ENCODE measurements at regions of chr10 and their contacts with region 1.

Region 1: GRCh38 chr10:80382989-80383388 is 25.4 kb upstream of the PRXL2A start:
- DNase-seq: peak; percentile 59
- H3K4me3 ChIP-seq: no peak overlapping the region
- H3K27ac ChIP-seq: no peak overlapping the region
- H3K4me1 ChIP-seq: no peaks in the 10 kb centered on the region
- CTCF ChIP-seq: peak; percentile 82

Region 2: DNA sequence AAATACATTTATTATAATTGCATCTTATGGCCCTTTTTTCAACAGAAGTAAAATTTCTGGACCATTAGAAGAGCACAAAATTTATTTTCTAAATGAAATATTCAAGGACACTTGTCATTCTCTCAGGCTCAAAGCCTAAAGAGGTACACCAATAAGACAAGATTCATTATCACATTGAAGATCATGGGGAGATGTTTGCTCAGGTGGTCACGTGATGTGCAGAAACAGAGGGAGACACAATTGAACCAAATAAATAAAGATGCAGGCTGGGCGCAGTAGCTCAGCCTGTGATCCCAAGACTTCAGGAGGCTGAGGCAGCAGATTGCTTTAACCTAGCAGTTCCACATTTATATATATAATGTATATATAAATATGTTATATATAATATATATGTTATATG is 357.7 kb before region 1 on chr10:
- CTCF ChIA-PET with region 1: no interaction called
- POLR2A ChIA-PET with region 1: no interaction called
- intact Hi-C with region 1: no loop called
- DNase-seq: no peak
- H3K4me3 ChIP-seq: no peak overlapping the region
- H3K27ac ChIP-seq: no peak overlapping the region
- H3K4me1 ChIP-seq: no peaks in the 10 kb centered on the region
- CTCF ChIP-seq: no peak

Region 3: GRCh38 chr10:80444646-80445319 is 61.8 kb after region 1 on chr10:
- CTCF ChIA-PET with region 1: no interaction called
- POLR2A ChIA-PET with region 1: no interaction called
- intact Hi-C with region 1: loop called (anchors 2 kb)
- DNase-seq: peak; percentile 79
- H3K4me3 ChIP-seq: no peak overlapping the region
- H3K27ac ChIP-seq: no peak overlapping the region
- H3K4me1 ChIP-seq: peaks cover 20% of the 10 kb centered on the region
- CTCF ChIP-seq: peak; percentile 89

Region 4: DNA sequence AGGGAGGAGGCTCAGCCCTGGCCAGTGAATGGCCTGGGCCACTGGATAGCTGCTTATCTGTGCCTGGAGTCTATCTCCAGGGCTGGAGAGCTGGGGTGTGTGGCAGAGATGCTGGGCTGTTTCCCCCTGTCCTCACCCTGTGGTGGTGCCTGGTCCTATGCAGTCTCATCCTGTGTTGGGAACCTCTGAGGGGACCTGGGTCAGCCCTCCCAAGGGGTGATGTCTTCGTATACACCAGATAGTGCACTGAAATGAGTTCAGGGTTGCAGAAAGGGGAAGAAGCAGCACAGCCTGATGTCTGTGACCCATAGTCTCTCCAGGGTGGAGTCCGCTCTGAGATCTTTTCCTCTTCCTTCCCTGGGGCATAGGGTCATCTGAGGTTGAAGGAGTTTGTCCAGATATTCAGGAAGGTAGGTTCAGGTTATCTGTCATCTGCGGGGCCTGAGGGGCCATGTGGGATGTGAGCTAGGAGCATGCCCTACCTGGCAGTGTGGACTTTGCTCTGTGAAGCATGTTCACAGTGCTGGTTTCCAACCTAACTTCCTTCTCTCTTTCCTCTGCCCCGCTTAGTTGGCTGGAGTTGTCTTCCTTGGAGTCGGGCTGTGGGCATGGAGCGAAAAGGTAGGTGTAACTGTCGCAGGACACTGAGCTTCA is 121.3 kb after region 1 on chr10:
- CTCF ChIA-PET with region 1: interaction called, 5 read pairs
- POLR2A ChIA-PET with region 1: interaction called, 4 read pairs
- intact Hi-C with region 1: loop called (anchors 1 kb)
- DNase-seq: no peak
- H3K4me3 ChIP-seq: no peak overlapping the region
- H3K27ac ChIP-seq: no peak overlapping the region
- H3K4me1 ChIP-seq: no peaks in the 10 kb centered on the region
- CTCF ChIP-seq: no peak

Region 5: GRCh38 chr10:80589726-80590373 is 206.9 kb after region 1 on chr10:
- CTCF ChIA-PET with region 1: no interaction called
- POLR2A ChIA-PET with region 1: no interaction called
- intact Hi-C with region 1: no loop called
- DNase-seq: no peak
- H3K4me3 ChIP-seq: no peak overlapping the region
- H3K27ac ChIP-seq: no peak overlapping the region
- H3K4me1 ChIP-seq: no peaks in the 10 kb centered on the region
- CTCF ChIP-seq: no peak

Region 6: GRCh38 chr10:80924063-80924952 is 541.3 kb after region 1 on chr10:
- CTCF ChIA-PET with region 1: no interaction called
- POLR2A ChIA-PET with region 1: no interaction called
- intact Hi-C with region 1: loop called (anchors 5 kb)
- DNase-seq: peak; percentile 42
- H3K4me3 ChIP-seq: no peak overlapping the region
- H3K27ac ChIP-seq: no peak overlapping the region
- H3K4me1 ChIP-seq: no peaks in the 10 kb centered on the region
- CTCF ChIP-seq: peak; percentile 90